AG04450 (cell line): ENCODE measurements at regions of chr1 and their contacts with region 1.

Region 1: GRCh38 chr1:36369061-36369861 is 16.5 kb downstream of the STK40 start:
- DNase-seq: no peak
- H3K4me3 ChIP-seq: no peak overlapping the region
- H3K27ac ChIP-seq: no peak overlapping the region
- H3K27me3 ChIP-seq: no peaks in the 10 kb centered on the region
- CTCF ChIP-seq: peak; percentile 89

Region 2: GRCh38 chr1:36300526-36300925 is 68.7 kb before region 1 on chr1:
- CTCF ChIA-PET with region 1: interaction called, 15 read pairs
- POLR2A ChIA-PET with region 1: interaction called, 3 read pairs
- DNase-seq: no peak
- H3K4me3 ChIP-seq: no peak overlapping the region
- H3K27ac ChIP-seq: peak overlapping the region; percentile 1
- H3K27me3 ChIP-seq: no peaks in the 10 kb centered on the region
- CTCF ChIP-seq: no peak

Region 3: DNA sequence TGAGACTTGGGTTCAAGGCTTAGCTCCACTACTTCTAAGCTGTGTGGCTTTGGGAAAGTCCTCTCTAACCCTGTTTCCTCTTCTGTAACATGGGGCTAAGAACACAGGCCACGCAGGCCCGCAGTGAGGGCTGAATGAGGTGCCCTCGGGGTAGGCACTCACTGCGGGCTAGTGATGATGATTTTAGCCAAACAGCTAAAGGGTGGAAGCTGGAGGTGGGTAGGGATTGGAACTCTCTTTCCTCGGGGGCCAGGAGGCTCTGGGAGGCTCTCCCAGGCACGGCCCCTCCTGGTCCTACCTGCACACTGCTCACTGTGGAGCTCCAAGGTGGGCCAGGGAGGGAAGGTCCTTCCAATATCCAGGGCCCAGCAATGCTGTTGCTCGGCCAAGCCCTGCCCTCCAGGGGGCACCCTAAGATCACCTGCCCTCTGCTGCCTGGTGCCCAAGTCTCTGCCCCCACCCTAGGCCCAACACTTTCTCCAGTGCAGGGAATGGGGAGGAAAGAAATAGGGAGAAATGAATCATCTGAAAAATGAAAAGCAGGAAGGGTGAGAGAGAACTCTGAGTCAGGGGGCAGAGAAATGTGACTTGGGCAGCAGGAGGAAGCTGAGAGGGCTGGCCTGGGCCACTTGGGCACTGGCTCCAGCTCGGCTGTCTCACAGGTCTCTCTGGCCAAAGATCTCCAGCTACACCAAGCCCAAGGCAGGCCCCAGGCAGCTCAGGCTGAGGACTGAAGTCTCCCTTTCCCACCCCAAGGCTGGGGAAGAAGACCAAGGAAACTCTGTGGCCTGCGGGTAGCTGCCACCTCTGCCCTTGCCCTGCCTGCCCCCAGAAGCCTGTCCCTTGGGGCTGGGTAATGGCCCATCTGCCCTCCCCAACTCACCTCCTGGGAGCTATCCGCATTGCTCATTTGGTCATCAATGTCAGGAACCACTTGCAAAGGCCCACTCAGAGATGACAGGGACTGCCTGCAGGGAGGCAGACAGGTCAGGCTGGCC is 26.5 kb before region 1 on chr1:
- CTCF ChIA-PET with region 1: interaction called, 30 read pairs
- POLR2A ChIA-PET with region 1: interaction called, 4 read pairs
- DNase-seq: no peak
- H3K4me3 ChIP-seq: no peak overlapping the region
- H3K27ac ChIP-seq: peak overlapping the region; percentile 65
- H3K27me3 ChIP-seq: no peaks in the 10 kb centered on the region
- CTCF ChIP-seq: peak; percentile 64

Region 4: GRCh38 chr1:36350659-36351226 is 18.5 kb before region 1 on chr1:
- CTCF ChIA-PET with region 1: interaction called, 53 read pairs
- POLR2A ChIA-PET with region 1: interaction called, 6 read pairs
- DNase-seq: no peak
- H3K4me3 ChIP-seq: no peak overlapping the region
- H3K27ac ChIP-seq: peak overlapping the region; percentile 98
- H3K27me3 ChIP-seq: no peaks in the 10 kb centered on the region
- CTCF ChIP-seq: no peak

Region 5: GRCh38 chr1:36420836-36421664 is 51.8 kb after region 1 on chr1:
- CTCF ChIA-PET with region 1: interaction called, 16 read pairs
- POLR2A ChIA-PET with region 1: no interaction called
- DNase-seq: peak; percentile 61
- H3K4me3 ChIP-seq: no peak overlapping the region
- H3K27ac ChIP-seq: no peak overlapping the region
- H3K27me3 ChIP-seq: no peaks in the 10 kb centered on the region
- CTCF ChIP-seq: peak; percentile 98

Region 6: GRCh38 chr1:36553591-36554322 is 184.5 kb after region 1 on chr1:
- CTCF ChIA-PET with region 1: no interaction called
- POLR2A ChIA-PET with region 1: no interaction called
- DNase-seq: peak; percentile 6
- H3K4me3 ChIP-seq: no peak overlapping the region
- H3K27ac ChIP-seq: no peak overlapping the region
- H3K27me3 ChIP-seq: peaks cover 8% of the 10 kb centered on the region
- CTCF ChIP-seq: peak; percentile 57